ENCODE measurements at regions of chr18 and their contacts with region 1.

Region 1: DNA sequence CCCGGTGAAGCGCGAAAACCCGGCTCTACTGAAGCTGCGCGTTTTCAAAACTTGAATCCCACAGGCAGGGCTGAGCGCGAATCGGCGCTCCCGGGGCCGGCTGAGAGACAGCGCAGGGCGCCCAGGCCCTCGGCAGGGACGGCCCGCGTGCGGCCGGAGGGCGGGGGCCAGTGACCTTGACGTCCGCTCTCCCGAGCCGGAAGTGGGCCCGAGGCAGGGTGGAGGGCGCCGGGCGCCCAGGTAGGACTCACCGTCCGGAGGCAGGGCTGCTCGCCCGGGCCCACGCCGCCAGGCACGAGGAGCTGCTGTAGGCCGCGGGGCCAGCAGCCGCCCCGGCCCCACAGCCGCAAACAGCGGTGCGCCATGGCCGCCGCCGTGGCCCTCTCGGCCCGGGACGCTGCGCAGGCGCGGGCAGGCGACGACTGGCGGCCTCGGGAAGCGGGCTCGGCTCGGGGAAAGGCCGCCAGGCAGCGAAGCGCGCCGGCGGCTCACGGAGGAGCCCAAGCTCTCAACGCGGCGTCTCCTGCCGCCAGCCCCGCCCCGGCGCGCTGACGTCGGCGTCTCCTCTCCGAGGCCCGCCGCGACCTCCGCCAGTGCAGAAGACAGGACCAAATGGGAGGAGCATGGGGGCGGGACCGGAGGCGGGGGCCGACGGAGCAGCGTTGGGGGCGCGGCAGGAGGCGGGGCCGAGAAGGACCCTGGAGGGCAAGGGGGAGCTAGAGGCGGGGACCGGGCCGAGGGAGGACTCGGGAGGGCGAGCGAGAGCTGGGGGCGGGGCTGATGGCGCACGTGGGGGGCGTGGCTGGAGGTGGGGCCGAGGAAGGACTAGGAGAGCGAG is at the start of gene AFG3L2:
- DNase-seq: peak; percentile 100
- ATAC-seq: peak; percentile 98
- H3K4me3 ChIP-seq: peak within 1 kb of the TSS; percentile 55 to 64
- H3K27ac ChIP-seq: peak within 1 kb of the TSS; percentile 76 to 94
- H3K4me1 ChIP-seq: no peaks in the 10 kb centered on the region
- H3K27me3 ChIP-seq: no peaks in the 10 kb centered on the region
- total RNA-seq, gene AFG3L2: 26.0 to 31.6 TPM

Region 2: DNA sequence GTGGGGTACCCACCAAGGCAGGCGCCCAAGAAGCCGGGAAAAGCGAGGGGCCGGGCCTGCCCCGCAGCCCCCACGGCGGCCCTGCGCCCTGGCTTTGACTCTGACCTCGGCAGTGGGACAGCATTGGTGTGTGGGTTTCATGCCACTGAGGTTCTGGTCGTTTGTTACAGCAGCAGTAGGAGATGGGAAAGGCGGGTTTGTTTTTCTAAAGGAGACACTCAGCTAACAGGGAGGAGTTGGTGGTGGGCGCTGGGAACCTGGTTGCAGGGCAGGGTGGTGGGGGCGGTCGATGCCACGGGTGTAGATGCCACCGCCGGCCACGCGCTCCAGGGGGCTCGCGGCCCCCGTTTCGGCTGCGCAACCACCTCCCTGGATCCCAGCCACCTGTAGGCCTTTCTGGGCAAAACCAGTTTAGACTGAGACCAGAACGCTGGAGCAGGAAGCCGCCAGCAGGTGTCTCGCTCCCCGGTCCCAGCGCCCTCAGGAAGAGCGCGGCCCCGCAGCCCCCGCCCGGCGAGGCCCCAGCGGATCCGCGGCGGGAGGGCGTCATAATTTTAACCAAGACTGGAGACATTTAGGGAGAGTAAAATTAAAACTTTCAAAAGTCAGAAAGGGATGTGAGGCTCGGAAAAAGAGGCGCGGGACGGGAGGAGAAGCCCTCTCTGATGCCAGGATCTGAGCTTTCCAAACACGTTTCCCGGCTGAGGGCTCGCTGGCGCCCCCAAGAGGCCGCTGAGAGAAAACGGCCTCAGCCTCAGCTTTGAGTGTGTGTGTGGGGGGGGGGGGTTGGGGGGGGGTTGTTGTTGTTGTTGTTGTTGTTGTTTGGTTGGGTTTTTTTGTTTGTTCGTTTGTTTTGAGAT is 105.3 kb before region 1 on chr18:
- intact Hi-C with region 1: loop called (anchors 5 to 10 kb)
- DNase-seq: peak; percentile 78 to 93
- ATAC-seq: peak; percentile 91
- H3K4me3 ChIP-seq: peak overlapping the region in 1 of 2 donors; percentile 14
- H3K27ac ChIP-seq: peak overlapping the region in 1 of 2 donors; percentile 13
- H3K4me1 ChIP-seq: no peaks in the 10 kb centered on the region
- H3K27me3 ChIP-seq: no peaks in the 10 kb centered on the region

Region 3: DNA sequence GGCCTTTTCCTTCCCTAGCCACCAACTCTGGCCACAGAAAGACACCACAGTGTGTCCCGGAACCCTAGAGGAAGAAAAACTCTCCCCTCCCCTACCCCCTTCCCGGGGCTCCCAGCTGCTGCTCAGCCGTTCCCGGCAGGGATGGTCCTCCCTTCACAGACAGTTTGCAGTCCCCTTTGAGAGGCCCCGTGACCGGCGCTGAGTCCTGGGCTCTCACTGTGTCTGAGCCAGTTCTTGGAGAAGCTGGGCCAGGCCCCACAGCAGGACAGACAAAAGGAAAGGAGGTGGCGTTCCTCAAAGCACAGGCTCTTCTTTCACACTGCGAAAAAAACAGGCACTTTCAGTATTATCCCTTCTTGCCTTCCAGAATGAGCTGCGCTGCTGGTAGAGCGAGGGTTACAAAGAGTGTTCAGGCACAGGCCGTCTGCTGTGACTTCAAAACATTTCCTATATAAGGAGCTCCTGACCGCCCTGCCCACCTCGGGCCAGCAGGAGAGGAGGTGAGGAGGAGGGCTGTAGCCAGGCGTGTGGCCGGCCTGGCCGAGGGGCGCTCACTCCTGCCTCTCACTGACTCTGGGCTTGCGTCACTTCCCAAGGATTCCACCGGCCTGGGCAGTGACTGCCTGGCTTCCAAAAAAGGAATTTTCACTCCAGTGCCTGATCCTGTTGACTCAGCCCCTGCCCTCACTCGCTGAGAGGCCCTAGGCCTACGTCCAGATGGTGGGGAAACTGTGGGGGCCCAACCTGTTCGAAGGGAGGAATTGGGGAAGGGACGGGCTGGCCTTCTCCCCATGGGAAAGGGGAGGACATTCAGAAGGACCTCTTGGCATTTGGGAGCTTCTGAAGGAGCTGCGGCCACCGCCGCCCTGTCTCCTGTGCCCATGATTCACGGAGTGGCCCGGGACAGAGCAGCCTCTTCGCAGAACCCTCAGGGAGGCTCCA is 97.9 kb before region 1 on chr18:
- intact Hi-C with region 1: loop called (anchors 5 to 10 kb)
- DNase-seq: peak; percentile 93 to 96
- ATAC-seq: peak; percentile 95
- H3K4me3 ChIP-seq: peak overlapping the region; percentile 34 to 36
- H3K27ac ChIP-seq: peak overlapping the region; percentile 72 to 99
- H3K4me1 ChIP-seq: peaks cover 0 to 2% of the 10 kb centered on the region in 2 donors
- H3K27me3 ChIP-seq: no peaks in the 10 kb centered on the region

Region 4: GRCh38 chr18:12433829-12434548 is 57.1 kb after region 1 on chr18:
- intact Hi-C with region 1: no loop called
- DNase-seq: no peak
- ATAC-seq: no peak
- H3K4me3 ChIP-seq: no peak overlapping the region
- H3K27ac ChIP-seq: no peak overlapping the region
- H3K4me1 ChIP-seq: no peaks in the 10 kb centered on the region
- H3K27me3 ChIP-seq: no peaks in the 10 kb centered on the region